ENCODE measurements at regions of chr9 and their contacts with region 1.

Region 1: GRCh38 chr9:127586537-127586936 is 25.5 kb upstream of the STXBP1 start:
- DNase-seq: peak; percentile 80 to 92 (median 87)
- H3K4me3 ChIP-seq: no peak overlapping the region
- H3K27ac ChIP-seq: no peak overlapping the region
- H3K4me1 ChIP-seq: no peaks in the 10 kb centered on the region
- H3K27me3 ChIP-seq: no peaks in the 10 kb centered on the region
- CTCF ChIP-seq: peak; percentile 96

Region 2: DNA sequence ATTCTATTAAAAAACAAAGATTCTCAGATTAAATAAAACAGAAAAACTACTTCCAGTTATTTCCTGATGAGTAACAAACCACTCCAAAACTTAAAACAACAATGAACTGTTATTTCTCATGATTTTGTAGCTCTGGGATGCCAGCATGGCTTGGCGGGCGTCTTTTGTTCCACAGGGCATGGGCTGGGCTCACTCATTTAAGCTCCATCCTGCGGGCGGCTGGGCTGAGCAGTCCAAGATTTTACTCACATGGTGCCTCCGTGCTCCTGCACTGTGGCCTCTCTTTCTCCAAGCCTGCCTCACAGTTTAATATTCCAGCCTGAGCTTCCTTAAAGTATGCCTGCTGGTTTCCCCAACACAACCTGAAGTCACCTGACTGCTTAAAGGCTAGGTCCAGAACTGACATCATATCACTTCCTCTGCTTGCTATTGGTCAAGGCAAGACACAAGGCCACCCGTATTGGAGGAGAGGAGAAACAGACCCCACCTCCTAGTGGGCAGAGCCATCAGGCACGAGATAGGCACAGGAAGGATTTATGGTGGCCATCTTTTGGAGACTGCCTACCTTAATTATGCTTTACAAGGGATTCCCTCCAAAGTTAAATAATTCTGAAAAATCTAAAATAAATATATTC is 823.3 kb before region 1 on chr9:
- intact Hi-C with region 1: no loop called
- DNase-seq: no peak
- H3K4me3 ChIP-seq: no peak overlapping the region
- H3K27ac ChIP-seq: no peak overlapping the region
- H3K4me1 ChIP-seq: no peaks in the 10 kb centered on the region
- H3K27me3 ChIP-seq: no peaks in the 10 kb centered on the region
- CTCF ChIP-seq: no peak

Region 3: GRCh38 chr9:127503947-127504782 is 82.4 kb before region 1 on chr9:
- intact Hi-C with region 1: loop called (anchors 5 kb)
- DNase-seq: peak; percentile 79 to 93 (median 84)
- H3K4me3 ChIP-seq: no peak overlapping the region
- H3K27ac ChIP-seq: no peak overlapping the region
- H3K4me1 ChIP-seq: no peaks in the 10 kb centered on the region
- H3K27me3 ChIP-seq: no peaks in the 10 kb centered on the region
- CTCF ChIP-seq: peak; percentile 92

Region 4: GRCh38 chr9:127723450-127723849 is 136.9 kb after region 1 on chr9:
- intact Hi-C with region 1: loop called (anchors 10 kb)
- DNase-seq: peak in 1 of 5 donors; percentile 37
- H3K4me3 ChIP-seq: no peak overlapping the region
- H3K27ac ChIP-seq: no peak overlapping the region
- H3K4me1 ChIP-seq: peaks cover 0 to 3% (median 0%) of the 10 kb centered on the region in 3 donors
- H3K27me3 ChIP-seq: no peaks in the 10 kb centered on the region
- CTCF ChIP-seq: no peak

Region 5: DNA sequence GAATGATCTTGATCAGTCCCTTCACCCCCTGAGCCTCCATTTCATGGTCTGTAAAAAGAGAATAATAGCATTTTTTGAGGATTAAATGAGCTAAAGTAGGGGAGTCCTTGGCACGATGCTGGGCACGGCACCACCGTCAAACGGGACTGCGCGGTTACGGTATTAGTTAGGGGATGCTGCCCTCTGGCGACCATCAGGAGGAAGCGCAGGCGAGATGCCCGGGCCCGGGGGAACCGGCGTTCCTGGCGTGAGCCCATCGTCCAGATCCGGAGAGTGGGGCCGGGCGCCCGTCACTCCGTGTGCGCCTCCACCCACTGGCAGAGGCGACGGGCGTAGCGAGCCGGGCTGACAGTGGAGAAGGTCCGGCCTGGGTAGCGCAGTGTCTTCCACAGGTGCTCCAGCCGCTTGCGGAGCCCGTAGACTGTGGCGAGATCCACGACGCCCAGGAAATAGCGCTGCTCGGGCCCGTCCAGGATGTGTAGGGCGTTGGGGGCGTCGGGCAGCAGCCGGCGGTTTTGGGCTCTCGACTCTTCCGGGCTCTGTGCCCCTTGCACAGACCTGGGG is 335.1 kb after region 1 on chr9:
- intact Hi-C with region 1: loop called (anchors 5 kb)
- DNase-seq: peak in 4 of 5 donors; percentile 41 to 88 (median 63)
- H3K4me3 ChIP-seq: no peak overlapping the region
- H3K27ac ChIP-seq: no peak overlapping the region
- H3K4me1 ChIP-seq: peaks cover 0 to 10% (median 0%) of the 10 kb centered on the region in 3 donors
- H3K27me3 ChIP-seq: peaks cover 2% of the 10 kb centered on the region
- CTCF ChIP-seq: peak; percentile 94

Measured in kidney (tissue), 22 donors.